ENCODE measurements at regions of chr18 and their contacts with region 1.

Region 1: GRCh38 chr18:13279181-13280069 is 60.9 kb downstream of the LDLRAD4 start:
- DNase-seq: no peak
- ATAC-seq: no peak
- H3K4me3 ChIP-seq: no peak overlapping the region
- H3K27ac ChIP-seq: peak overlapping the region in 7 of 10 donors; percentile 14 to 61 (median 48)
- H3K4me1 ChIP-seq: peaks cover 1 to 59% (median 46%) of the 10 kb centered on the region in 9 donors
- H3K27me3 ChIP-seq: no peaks in the 10 kb centered on the region
- CTCF ChIP-seq: no peak

Region 2: GRCh38 chr18:13318731-13319501 is 39.5 kb after region 1 on chr18:
- intact Hi-C with region 1: loop called in 1 of 10 experiments (anchors 5 kb)
- DNase-seq: no peak
- ATAC-seq: peak; percentile 19 to 72 (median 69)
- H3K4me3 ChIP-seq: no peak overlapping the region
- H3K27ac ChIP-seq: peak overlapping the region in 7 of 10 donors; percentile 26 to 63 (median 49)
- H3K4me1 ChIP-seq: peaks cover 0 to 27% (median 18%) of the 10 kb centered on the region in 9 donors
- H3K27me3 ChIP-seq: no peaks in the 10 kb centered on the region
- CTCF ChIP-seq: no peak

Region 3: DNA sequence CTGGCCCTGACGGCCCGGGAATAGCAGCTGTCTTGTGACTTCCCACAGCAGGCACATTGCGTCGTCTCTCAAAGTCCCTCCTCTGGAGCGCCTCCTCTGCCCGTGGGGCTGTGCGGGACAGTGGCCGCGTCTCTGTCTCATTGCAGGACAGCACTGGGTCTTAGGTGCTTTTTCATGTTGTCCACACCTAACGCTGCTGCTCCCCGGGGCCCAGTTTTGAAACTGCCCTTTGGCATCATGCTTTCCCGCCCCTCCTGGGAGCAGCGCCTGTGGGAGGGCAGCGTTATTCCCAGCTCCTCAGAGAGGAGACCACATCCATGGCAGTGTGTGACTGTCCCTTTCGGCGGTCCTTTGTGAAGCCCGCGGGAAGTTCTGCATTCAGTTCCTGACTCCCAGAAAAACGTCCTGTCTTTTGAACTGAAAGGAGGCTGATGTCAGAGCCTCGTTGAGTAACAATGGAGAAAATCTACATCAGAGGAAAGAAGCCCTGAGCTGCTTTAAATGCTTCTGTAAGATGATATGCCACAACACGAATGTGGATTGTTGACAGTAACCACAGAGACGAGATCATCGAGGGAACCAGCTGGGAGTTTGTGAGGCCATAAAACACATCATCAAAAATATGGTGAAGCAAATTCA is 220.9 kb after region 1 on chr18:
- intact Hi-C with region 1: loop called in 1 of 10 experiments (anchors 10 kb)
- DNase-seq: peak; percentile 42 to 59
- ATAC-seq: peak; percentile 61 to 90 (median 84)
- H3K4me3 ChIP-seq: peak overlapping the region in 7 of 10 donors; percentile 25 to 41 (median 35)
- H3K27ac ChIP-seq: peak overlapping the region; percentile 53 to 93 (median 83)
- H3K4me1 ChIP-seq: peaks cover 18 to 53% (median 38%) of the 10 kb centered on the region in 9 donors
- H3K27me3 ChIP-seq: no peaks in the 10 kb centered on the region
- CTCF ChIP-seq: peak in 3 of 9 donors; percentile 28 to 39 (median 29)

Measured in heart right ventricle (tissue), 16 donors.